ENCODE measurements at regions of chr19 and their contacts with region 1.

Region 1: GRCh38 chr19:6530386-6531161 is at the start of gene TNFSF9:
- DNase-seq: peak; percentile 93
- H3K4me3 Mint-ChIP-seq: peak within 1 kb of the TSS; percentile 84
- H3K27ac Mint-ChIP-seq: peak within 1 kb of the TSS; percentile 94
- H3K4me1 Mint-ChIP-seq: peaks cover 34% of the 10 kb centered on the region
- H3K27me3 Mint-ChIP-seq: no peaks in the 10 kb centered on the region
- CTCF ChIP-seq: no peak
- total RNA-seq, gene TNFSF9: 6.2 and 6.9 TPM in 2 replicates

Region 2: DNA sequence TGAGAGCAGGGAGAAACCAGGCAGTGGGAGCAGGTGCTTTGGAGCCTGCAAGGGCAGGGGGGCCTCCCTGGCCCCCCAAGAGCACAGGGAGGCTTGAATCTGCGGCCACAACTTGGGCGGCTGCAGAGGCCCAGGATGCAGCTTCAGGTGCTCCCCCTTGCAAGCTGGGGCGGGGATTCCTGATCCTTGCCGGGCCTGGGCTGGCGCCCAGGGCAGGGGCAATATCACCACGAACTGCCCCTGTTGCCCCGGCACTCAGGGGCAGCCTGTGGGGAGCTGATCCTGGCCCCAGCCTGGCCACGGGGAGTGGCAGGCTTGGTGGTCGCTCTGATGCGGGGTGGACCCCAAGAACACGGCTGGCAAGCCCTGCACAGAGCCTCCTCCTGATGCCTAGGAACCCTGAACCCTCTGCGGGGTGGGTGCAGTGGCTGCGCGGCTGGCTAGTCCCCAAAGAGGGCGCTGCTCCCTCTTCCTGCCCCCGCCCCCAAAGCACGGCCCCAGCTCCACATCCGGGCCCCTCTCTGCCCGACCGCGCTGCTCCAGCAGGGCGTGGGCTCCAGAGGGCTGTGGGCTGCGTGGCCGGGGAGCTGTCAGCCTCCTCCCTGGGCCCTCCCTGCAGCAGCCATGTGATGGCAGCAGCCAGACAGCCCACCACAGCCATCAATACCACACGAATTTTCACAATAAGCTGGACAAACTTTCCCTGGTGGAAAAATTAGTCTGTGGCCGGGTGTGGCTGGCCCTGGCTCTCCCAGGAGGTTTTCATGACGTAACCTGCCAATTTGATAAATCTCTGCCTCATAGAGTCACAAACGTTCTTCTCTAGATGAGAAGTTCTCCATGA is 21.3 kb after region 1 on chr19:
- CTCF ChIA-PET with region 1: no interaction called
- POLR2A ChIA-PET with region 1: interaction called, 10 read pairs
- intact Hi-C with region 1: no loop called
- DNase-seq: no peak
- H3K4me3 Mint-ChIP-seq: no peak overlapping the region
- H3K27ac Mint-ChIP-seq: no peak overlapping the region
- H3K4me1 Mint-ChIP-seq: peaks cover 5% of the 10 kb centered on the region
- H3K27me3 Mint-ChIP-seq: no peaks in the 10 kb centered on the region
- CTCF ChIP-seq: no peak

Region 3: GRCh38 chr19:6577476-6578125 is 47.0 kb after region 1 on chr19:
- CTCF ChIA-PET with region 1: no interaction called
- POLR2A ChIA-PET with region 1: interaction called, 26 read pairs
- intact Hi-C with region 1: loop called (anchors 5 kb)
- DNase-seq: peak; percentile 93
- H3K4me3 Mint-ChIP-seq: no peak overlapping the region
- H3K27ac Mint-ChIP-seq: no peak overlapping the region
- H3K4me1 Mint-ChIP-seq: peaks cover 20% of the 10 kb centered on the region
- H3K27me3 Mint-ChIP-seq: no peaks in the 10 kb centered on the region
- CTCF ChIP-seq: no peak

Region 4: GRCh38 chr19:6588508-6589345 is 58.2 kb after region 1 on chr19:
- CTCF ChIA-PET with region 1: no interaction called
- POLR2A ChIA-PET with region 1: no interaction called
- intact Hi-C with region 1: no loop called
- DNase-seq: no peak
- H3K4me3 Mint-ChIP-seq: peak overlapping the region; percentile 77
- H3K27ac Mint-ChIP-seq: no peak overlapping the region
- H3K4me1 Mint-ChIP-seq: peaks cover 39% of the 10 kb centered on the region
- H3K27me3 Mint-ChIP-seq: no peaks in the 10 kb centered on the region
- CTCF ChIP-seq: no peak

Measured in MCF 10A (cell line).